AG04449 (cell line): ENCODE measurements at regions of chr5 and their contacts with region 1.

Region 1: DNA sequence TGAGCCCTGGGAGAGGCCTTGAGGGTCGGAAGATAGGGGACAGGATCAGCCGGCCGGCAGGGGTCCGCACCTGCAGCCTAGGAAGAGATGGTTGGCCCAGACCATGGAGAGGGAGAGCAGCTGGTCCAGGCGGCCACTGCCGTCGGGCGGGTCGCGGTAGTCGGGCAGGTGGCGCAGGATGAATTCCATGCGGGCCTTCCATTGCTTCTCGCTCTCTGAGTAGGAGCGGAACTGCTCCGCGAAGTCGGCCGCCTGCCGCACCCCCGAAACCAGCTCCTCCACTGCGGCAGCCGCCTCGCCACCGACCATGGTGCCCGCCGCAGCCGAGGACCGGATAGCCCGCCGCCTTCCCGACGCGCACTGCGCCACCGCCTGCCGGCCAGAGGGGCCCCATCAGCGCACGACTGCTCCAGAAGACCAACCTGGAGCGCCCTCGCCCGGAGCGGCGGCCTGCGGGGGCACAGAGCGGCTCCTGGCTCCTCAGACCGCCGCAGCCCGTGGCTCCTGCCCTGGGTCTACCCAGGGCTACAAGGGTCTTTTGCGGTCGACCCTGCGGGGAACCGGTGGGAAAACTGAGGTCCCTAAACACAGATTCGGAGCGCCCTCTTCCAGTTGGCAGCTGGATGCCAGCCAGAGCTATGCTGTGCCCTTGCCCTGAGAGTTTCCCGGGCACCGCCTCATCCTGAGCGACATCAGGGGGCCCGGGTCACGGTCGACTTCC is at the start of gene CDKN2AIPNL:
- DNase-seq: peak; percentile 16
- H3K4me3 ChIP-seq: peak within 1 kb of the TSS; percentile 92
- CTCF ChIP-seq: peak; percentile 93

Region 2: DNA sequence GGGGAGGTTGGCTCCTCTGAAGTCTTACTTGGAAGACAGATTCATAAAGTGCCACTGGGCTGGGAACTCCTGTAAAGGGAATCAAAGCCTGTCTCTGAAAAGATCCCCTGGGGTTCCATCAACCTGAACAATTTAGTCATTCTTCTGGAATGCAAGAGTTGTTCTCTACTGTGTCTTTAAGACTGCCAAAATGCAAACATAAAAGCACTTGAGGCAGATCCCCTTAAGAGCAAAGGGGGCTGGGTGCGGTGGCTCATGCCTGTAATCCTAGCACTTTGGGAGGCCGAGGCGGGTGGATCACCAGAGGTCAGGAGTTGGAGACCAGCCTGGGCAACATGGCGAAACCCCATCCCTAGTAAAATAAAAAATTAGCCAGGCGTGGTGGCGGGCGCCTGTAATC is 16.8 kb before region 1 on chr5:
- CTCF ChIA-PET with region 1: interaction called, 50 read pairs
- POLR2A ChIA-PET with region 1: interaction called, 4 read pairs
- DNase-seq: no peak
- H3K4me3 ChIP-seq: no peak overlapping the region
- CTCF ChIP-seq: no peak

Region 3: GRCh38 chr5:134430001-134430569 is 18.4 kb after region 1 on chr5:
- CTCF ChIA-PET with region 1: interaction called, 59 read pairs
- POLR2A ChIA-PET with region 1: no interaction called
- DNase-seq: no peak
- H3K4me3 ChIP-seq: no peak overlapping the region
- CTCF ChIP-seq: no peak

Region 4: DNA sequence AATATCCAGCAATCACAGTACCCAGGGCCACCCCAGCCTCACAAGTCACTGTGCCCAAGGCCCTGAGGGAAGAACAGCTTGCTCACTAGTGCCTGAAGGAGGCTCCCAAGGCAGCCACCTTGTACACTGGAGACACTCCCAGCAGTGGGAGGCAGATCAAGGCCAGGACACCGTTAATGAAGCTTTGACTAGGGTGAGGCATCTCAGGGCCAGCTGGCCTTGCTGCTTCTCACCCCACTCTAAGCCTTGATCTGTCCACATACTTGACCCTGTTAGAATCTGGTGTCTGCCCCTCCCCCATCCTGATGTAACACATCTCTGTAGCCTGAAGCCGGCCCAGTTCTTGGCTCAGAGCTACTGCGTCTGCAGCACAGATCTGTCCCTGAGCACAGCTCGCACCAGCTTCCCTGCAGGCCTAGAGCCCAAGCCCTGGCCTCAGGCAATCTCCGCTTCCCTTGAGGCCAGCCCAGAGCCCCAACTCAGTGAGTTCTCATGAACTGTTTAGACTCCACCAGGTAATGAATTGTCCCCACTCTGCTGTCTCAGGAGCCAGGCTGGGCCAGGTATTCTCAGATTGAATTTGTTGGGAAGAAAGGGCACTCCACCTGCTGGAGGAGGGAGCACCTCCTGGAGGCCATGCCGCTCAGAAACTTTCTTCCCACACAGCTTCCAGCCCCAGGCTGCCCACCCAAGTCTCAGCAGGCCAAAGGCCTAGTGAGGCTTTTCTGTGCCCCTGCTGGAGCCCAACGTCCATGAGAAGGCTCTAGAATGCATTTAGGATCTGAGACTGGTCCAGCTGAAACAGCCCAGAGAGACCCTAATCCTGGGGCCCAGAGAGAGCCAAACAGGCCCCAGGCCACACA is 100.3 kb after region 1 on chr5:
- CTCF ChIA-PET with region 1: interaction called, 10 read pairs
- POLR2A ChIA-PET with region 1: no interaction called
- DNase-seq: no peak
- H3K4me3 ChIP-seq: no peak overlapping the region
- CTCF ChIP-seq: no peak